GM12878 (cell line): ENCODE measurements at regions of chr1 and their contacts with region 1.

Region 1: GRCh38 chr1:107529502-107530149 is 388.8 kb downstream of the NTNG1 start:
- DNase-seq: peak; percentile 19
- ATAC-seq: peak; percentile 98
- H3K4me3 ChIP-seq: no peak overlapping the region
- H3K27ac ChIP-seq: no peak overlapping the region
- H3K4me1 ChIP-seq: no peaks in the 10 kb centered on the region
- H3K27me3 ChIP-seq: no peaks in the 10 kb centered on the region
- CTCF ChIP-seq: peak; percentile 85 to 95 (median 88); a peak in 5 of 6 replicates
- EP300 ChIP-seq: no peak
- POLR2A ChIP-seq: no peak
- RAD21 ChIP-seq: peak; percentile 98

Region 2: DNA sequence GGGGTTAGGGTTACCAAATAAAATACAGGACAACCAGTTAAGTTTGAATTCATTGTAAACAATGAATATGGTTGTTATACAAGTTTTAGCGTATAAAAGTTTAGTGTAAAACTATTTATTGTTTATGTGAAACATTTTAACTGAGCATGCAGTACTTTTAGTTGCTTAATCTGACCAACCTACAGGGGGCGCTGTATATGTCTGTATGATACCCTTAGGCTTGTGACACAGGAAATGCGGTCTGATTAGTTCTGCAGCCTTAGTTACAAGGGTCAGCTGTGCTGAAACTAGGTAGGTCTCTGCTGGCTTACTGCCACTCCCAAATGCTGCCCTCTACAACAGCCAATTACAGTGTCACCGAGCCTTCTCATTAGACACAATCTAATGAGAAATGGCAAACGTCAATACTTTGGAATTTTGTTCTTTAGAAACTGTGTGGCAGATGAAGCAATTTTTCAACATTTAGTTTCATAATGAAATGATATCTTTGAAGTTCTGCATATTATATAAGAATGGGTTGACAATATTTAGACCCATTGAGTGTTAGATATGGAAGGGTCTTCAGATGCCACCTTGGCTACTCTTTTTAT is 332.6 kb before region 1 on chr1:
- CTCF ChIA-PET with region 1: interaction called, 32 read pairs
- POLR2A ChIA-PET with region 1: no interaction called
- RAD21 ChIA-PET with region 1: interaction called, 6 read pairs
- SMC1A ChIA-PET with region 1: interaction called, 5 read pairs
- in situ Hi-C with region 1: loop called (anchors 5 kb)
- intact Hi-C with region 1: loop called (anchors 1 kb)
- DNase-seq: peak; percentile 26
- ATAC-seq: peak; percentile 97
- H3K4me3 ChIP-seq: no peak overlapping the region
- H3K27ac ChIP-seq: no peak overlapping the region
- H3K4me1 ChIP-seq: no peaks in the 10 kb centered on the region
- H3K27me3 ChIP-seq: no peaks in the 10 kb centered on the region
- CTCF ChIP-seq: peak; percentile 39 to 65 (median 50)
- EP300 ChIP-seq: no peak
- POLR2A ChIP-seq: no peak
- RAD21 ChIP-seq: peak; percentile 65

Region 3: GRCh38 chr1:107379826-107380225 is 149.8 kb before region 1 on chr1:
- CTCF ChIA-PET with region 1: interaction called, 16 read pairs
- POLR2A ChIA-PET with region 1: no interaction called
- RAD21 ChIA-PET with region 1: no interaction called
- SMC1A ChIA-PET with region 1: no interaction called
- in situ Hi-C with region 1: no loop called
- intact Hi-C with region 1: no loop called
- DNase-seq: no peak
- ATAC-seq: no peak
- H3K4me3 ChIP-seq: no peak overlapping the region
- H3K27ac ChIP-seq: no peak overlapping the region
- H3K4me1 ChIP-seq: no peaks in the 10 kb centered on the region
- H3K27me3 ChIP-seq: no peaks in the 10 kb centered on the region
- CTCF ChIP-seq: no peak
- EP300 ChIP-seq: no peak
- POLR2A ChIP-seq: no peak
- RAD21 ChIP-seq: no peak

Region 4: GRCh38 chr1:107450899-107451664 is 78.5 kb before region 1 on chr1:
- CTCF ChIA-PET with region 1: interaction called, 8 read pairs
- POLR2A ChIA-PET with region 1: no interaction called
- RAD21 ChIA-PET with region 1: interaction called, 5 read pairs
- SMC1A ChIA-PET with region 1: interaction called, 10 read pairs
- in situ Hi-C with region 1: no loop called
- intact Hi-C with region 1: no loop called
- DNase-seq: peak; percentile 72
- ATAC-seq: peak; percentile 93
- H3K4me3 ChIP-seq: peak overlapping the region; percentile 45; the same call in 1 of the 2 replicates
- H3K27ac ChIP-seq: peak overlapping the region; percentile 96
- H3K4me1 ChIP-seq: peaks cover 29% of the 10 kb centered on the region
- H3K27me3 ChIP-seq: no peaks in the 10 kb centered on the region
- CTCF ChIP-seq: no peak
- EP300 ChIP-seq: peak; percentile 80 to 91; a peak in 3 of 4 replicates
- POLR2A ChIP-seq: peak; percentile 59
- RAD21 ChIP-seq: no peak

Region 5: DNA sequence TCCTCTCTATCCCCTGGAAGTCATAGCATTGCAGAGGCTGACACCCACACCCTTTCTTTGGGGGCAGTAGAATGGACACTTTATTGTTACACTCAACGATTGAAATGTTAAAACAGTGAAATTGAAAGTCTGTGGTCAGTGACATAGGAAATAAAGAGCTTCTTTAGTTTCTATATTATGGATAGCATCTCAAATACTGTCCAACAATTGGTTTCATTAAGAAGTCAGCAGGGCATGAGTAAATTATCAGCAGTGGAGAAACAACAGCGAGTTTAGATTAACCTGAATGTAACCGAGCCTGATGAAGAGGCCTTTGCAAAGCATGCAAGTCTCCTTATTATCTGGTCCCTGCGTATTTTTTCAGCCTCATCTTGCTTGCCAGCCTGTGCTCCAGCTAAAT is 38.0 kb before region 1 on chr1:
- CTCF ChIA-PET with region 1: interaction called, 20 read pairs
- POLR2A ChIA-PET with region 1: no interaction called
- RAD21 ChIA-PET with region 1: no interaction called
- SMC1A ChIA-PET with region 1: interaction called, 22 read pairs
- in situ Hi-C with region 1: no loop called
- intact Hi-C with region 1: no loop called
- DNase-seq: no peak
- ATAC-seq: peak; percentile 79
- H3K4me3 ChIP-seq: no peak overlapping the region
- H3K27ac ChIP-seq: no peak overlapping the region
- H3K4me1 ChIP-seq: no peaks in the 10 kb centered on the region
- H3K27me3 ChIP-seq: no peaks in the 10 kb centered on the region
- CTCF ChIP-seq: no peak
- EP300 ChIP-seq: no peak
- POLR2A ChIP-seq: no peak
- RAD21 ChIP-seq: no peak

Region 6: DNA sequence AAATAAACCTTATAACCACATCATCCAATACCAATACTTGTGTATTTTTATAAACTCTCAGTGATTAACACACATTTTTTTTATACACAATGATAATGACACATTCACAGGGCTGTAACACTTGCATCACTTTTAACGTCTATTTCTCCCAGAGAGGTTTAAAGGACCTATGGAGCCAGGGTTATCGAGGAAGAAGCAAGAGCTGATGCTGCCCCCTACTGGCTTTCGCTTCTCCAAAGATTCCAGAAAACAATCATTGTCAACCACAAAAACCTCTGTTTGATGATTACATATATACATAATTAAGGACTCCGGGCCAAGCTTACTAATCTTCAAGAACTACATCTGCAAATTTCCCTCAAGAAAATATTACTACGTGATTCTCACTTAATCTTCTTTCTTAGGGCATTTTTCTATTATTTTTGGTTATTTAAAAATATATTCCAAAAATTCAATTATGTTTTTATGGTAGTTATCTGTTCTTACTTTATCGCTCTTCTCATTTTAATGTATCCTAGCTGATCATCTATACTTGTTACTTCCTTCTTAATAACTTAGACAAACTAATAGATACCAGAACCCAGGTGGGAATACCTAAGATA is 220.8 kb after region 1 on chr1:
- CTCF ChIA-PET with region 1: interaction called, 69 read pairs
- POLR2A ChIA-PET with region 1: no interaction called
- RAD21 ChIA-PET with region 1: interaction called, 13 read pairs
- SMC1A ChIA-PET with region 1: interaction called, 44 read pairs
- in situ Hi-C with region 1: no loop called
- intact Hi-C with region 1: loop called (anchors 2 kb)
- DNase-seq: peak; percentile 19
- ATAC-seq: peak; percentile 83
- H3K4me3 ChIP-seq: no peak overlapping the region
- H3K27ac ChIP-seq: no peak overlapping the region
- H3K4me1 ChIP-seq: no peaks in the 10 kb centered on the region
- H3K27me3 ChIP-seq: no peaks in the 10 kb centered on the region
- CTCF ChIP-seq: peak; percentile 53 to 68 (median 60)
- EP300 ChIP-seq: no peak
- POLR2A ChIP-seq: no peak
- RAD21 ChIP-seq: peak; percentile 71